ENCODE measurements at regions of chr3 and their contacts with region 1.

Region 1: GRCh38 chr3:162777111-162777510 is 1280.5 kb downstream of the OTOL1 start:
- ATAC-seq: no peak
- H3K4me3 ChIP-seq: no peak overlapping the region
- H3K27ac ChIP-seq: no peak overlapping the region
- H3K4me1 ChIP-seq: no peaks in the 10 kb centered on the region

Region 2: DNA sequence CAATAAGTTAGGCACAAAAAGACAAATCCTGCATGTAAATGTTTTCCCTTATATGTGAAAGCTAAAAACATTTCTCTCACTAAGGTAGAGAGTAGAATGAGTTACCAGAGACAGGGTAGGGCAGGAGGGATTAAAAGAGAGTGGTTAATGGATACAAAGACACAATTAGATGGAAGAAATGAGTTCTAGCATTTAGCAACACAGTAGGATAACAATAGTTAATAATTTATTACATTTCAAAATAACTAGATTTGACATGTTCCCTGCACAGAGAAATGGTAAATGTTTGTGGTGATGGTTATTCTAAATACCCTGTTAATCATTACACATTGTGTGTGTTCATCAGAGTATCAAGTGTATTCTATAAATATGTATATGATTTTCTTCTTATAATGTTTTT is 120.2 kb after region 1 on chr3:
- in situ Hi-C with region 1: loop called in 1 of 9 experiments (anchors 25 kb)
- ATAC-seq: no peak
- H3K4me3 ChIP-seq: no peak overlapping the region
- H3K27ac ChIP-seq: no peak overlapping the region
- H3K4me1 ChIP-seq: no peaks in the 10 kb centered on the region

Measured in motor neuron (in vitro differentiated cells).